Caco-2 (cell line): ENCODE measurements at regions of chr12 and their contacts with region 1.

Region 1: GRCh38 chr12:108768591-108769500 is 37.5 kb upstream of the CORO1C start:
- DNase-seq: peak in 1 of 2 experiments; percentile 37
- H3K4me3 ChIP-seq: no peak overlapping the region; the same call in 1 of the 2 replicates
- H3K4me3 Mint-ChIP-seq: peak overlapping the region; percentile 23
- H3K27ac Mint-ChIP-seq: no peak overlapping the region
- H3K4me1 ChIP-seq: peaks cover 18% of the 10 kb centered on the region
- H3K4me1 Mint-ChIP-seq: peaks cover 7% of the 10 kb centered on the region
- H3K27me3 ChIP-seq: no peaks in the 10 kb centered on the region
- H3K27me3 Mint-ChIP-seq: no peaks in the 10 kb centered on the region
- CTCF ChIP-seq: no peak

Region 2: DNA sequence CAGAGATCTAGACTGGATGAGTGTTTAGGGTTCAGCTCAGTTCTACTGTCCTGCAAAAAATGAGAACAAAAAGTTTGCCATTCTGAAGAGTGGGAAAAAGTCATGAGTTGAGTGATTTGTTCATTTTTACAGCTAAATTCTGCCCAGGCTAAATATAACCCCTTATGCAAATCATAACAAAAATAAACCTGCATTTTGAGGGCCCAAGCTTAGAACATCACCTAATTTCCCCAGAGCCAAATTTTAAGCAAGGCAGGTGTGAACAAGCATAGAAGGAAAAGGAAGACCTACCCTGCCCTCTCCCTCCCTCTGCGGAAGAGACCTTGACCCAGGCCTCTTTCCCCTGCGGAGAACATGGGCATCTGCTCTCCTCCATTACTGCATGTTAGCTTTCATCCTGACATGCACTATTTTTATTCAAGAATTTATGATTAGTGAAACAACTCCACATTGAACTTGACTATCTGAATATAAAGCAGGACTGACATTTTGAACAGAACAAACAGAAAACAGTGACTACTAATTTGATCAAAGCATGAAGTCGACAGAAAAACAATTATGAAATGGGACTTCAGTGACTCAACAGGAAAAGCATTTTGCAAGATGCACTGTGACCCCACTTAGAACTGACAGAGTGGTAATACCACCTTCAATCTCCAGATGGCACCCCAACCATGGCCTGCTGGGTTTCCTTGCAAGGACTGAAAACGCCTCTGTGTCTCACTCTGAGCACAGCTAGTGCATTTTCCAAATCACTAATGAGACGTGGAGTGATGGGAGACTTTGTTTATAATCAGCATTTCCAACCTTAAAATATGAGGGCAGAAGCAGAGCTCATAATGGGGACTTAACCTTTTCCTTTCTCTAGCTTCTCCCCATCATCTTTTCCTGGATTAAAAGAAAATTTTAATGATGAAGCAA is 104.2 kb before region 1 on chr12:
- CTCF ChIA-PET with region 1: interaction called, 12 read pairs
- POLR2A ChIA-PET with region 1: no interaction called
- intact Hi-C with region 1: loop called (anchors 1 kb)
- DNase-seq: peak; percentile 84 to 90
- H3K4me3 ChIP-seq: no peak overlapping the region
- H3K4me3 Mint-ChIP-seq: no peak overlapping the region
- H3K27ac Mint-ChIP-seq: no peak overlapping the region
- H3K4me1 ChIP-seq: peaks cover 6% of the 10 kb centered on the region; the same call in 1 of the 2 replicates
- H3K4me1 Mint-ChIP-seq: peaks cover 11% of the 10 kb centered on the region
- H3K27me3 ChIP-seq: no peaks in the 10 kb centered on the region
- H3K27me3 Mint-ChIP-seq: no peaks in the 10 kb centered on the region
- CTCF ChIP-seq: peak; percentile 86 to 88